Activated CD4-positive, alpha-beta T cell treated with anti-CD3 and anti-CD28 coated beads for 36 hours (primary cell): ENCODE measurements at regions of chr1 and their contacts with region 1.

Region 1: DNA sequence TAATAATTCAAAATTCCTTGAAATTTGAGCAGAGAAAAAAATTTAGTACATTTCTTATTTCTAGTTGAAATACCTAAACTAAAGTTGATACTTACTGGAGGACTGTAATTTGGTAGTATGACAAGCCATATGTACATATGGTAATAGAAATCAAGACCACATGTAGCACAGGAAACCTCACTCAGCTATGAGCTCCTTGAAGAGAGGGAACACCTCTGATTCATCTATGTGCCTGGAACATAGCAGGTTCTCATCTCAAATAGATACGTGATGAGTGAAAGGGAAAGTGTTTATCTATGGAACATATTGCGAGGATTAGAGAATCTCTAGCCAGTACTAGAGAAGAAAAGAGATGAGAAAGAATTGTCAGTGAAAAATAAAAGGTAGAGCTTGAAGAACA is 47.9 kb upstream of the GNG4 start:
- DNase-seq: no peak
- ATAC-seq: peak; percentile 100
- H3K4me3 Mint-ChIP-seq: no peak overlapping the region
- H3K27ac Mint-ChIP-seq: peak overlapping the region; percentile 85
- H3K4me1 Mint-ChIP-seq: peaks cover 17% of the 10 kb centered on the region
- H3K27me3 Mint-ChIP-seq: no peaks in the 10 kb centered on the region

Region 2: GRCh38 chr1:235206533-235207208 is 490.8 kb before region 1 on chr1:
- CTCF ChIA-PET with region 1: no interaction called
- POLR2A ChIA-PET with region 1: no interaction called
- intact Hi-C with region 1: loop called in 1 of 2 experiments (anchors 2 kb)
- DNase-seq: peak; percentile 25
- ATAC-seq: peak; percentile 98
- H3K4me3 Mint-ChIP-seq: peak overlapping the region; percentile 12
- H3K27ac Mint-ChIP-seq: peak overlapping the region; percentile 92
- H3K4me1 Mint-ChIP-seq: peaks cover 29% of the 10 kb centered on the region
- H3K27me3 Mint-ChIP-seq: no peaks in the 10 kb centered on the region

Region 3: DNA sequence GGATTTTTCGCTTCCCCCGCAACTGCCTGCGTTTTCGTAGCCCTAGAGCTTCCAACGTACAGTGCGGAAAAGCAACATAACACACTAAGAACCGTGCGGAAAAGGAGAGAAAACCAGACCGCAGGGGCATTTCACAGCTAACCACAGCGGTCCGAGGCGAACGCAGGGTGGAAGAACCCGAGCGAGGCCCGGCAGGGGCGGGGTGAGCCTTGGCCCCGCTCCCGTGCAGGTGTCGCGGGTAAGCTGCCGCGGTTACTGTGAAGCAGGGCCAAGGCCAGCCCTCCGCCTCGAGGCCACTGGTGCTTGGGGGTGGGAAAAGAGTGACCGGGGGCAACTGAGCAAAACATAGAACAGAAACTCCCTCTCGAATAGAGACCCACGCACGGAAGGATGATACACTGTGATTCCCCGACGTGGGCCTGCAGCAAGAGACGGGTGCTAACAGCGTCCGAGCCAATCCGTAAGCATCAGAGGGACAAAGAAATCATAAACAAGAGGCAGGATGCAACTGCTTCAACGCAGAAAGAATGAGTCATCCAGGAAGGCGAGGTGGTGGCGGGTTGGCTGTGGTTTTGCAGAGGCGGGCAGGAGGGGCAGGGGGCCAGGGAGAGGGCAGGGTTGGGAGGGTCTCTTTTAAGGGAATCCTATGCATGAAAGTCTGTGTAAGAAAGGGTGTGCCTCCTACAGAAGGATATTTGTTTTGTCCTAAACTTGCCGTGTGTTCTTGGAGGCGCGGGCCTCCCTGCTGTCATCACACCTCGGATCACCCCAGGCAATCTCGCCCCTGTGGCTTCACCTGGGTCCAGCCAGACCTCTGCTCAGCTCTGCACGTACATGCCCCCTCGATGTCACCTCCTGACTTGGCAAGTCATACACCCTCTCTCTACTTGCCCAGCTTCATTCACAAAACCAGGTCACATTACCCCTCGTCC is 55.2 kb before region 1 on chr1:
- CTCF ChIA-PET with region 1: interaction called, 3 read pairs
- POLR2A ChIA-PET with region 1: no interaction called
- intact Hi-C with region 1: loop called in 1 of 2 experiments (anchors 2 kb)
- DNase-seq: peak; percentile 84
- ATAC-seq: peak; percentile 89
- H3K4me3 Mint-ChIP-seq: peak overlapping the region; percentile 47
- H3K27ac Mint-ChIP-seq: peak overlapping the region; percentile 77
- H3K4me1 Mint-ChIP-seq: peaks cover 23% of the 10 kb centered on the region
- H3K27me3 Mint-ChIP-seq: peaks cover 25% of the 10 kb centered on the region

Region 4: GRCh38 chr1:235917267-235917811 is 219.8 kb after region 1 on chr1:
- CTCF ChIA-PET with region 1: no interaction called
- POLR2A ChIA-PET with region 1: no interaction called
- intact Hi-C with region 1: loop called in 1 of 2 experiments (anchors 1 kb)
- DNase-seq: peak; percentile 84
- ATAC-seq: peak; percentile 97
- H3K4me3 Mint-ChIP-seq: peak overlapping the region; percentile 2
- H3K27ac Mint-ChIP-seq: peak overlapping the region; percentile 75
- H3K4me1 Mint-ChIP-seq: peaks cover 34% of the 10 kb centered on the region
- H3K27me3 Mint-ChIP-seq: no peaks in the 10 kb centered on the region